HepG2 (cell line): ENCODE measurements at regions of chr15 and their contacts with region 1.

Region 1: DNA sequence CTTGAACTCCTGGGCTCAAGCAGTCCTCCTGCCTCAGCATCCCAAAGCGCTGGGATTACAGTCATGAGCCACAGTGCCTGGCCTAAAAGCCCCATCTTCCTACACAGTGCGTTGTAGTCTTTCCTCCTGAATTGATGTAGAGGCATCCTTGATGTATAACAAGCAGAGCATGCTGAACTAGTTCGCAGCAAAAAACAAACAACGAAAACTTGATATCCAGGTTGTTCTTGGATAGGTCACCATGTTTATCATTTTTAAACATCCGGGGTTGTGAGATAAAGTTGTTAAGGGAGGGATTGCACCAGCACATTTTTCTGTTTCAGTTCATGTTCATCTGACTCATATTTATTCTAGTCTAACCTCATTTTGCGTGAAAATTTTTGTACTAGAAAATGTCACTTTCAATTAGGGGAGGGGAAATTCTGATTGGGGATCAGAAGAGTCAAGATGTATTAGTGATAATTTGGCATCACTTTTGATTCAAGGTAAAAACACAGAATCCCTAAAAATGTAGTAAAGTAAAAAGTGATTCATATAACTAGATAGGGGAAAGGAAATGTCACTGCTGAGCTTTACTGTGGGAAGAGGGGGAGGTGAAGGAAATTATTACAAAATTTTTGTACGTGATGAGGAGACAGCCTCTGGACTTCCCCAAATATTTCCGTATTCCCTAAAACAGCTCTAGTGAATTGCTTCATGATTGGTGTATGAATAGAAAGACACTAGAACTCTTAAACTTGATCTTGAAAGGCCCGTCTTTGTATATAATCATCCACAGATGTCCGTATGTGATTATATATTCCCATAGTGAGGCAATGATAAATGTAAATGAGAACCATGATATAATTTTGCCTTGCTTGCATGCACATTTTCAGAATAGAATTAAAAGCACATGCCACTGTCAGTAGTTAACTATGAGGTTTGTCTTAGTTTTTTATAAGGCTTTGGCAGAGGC is 22.9 kb downstream of the RAB8B start:
- DNase-seq: peak; percentile 39
- ATAC-seq: no peak
- H3K4me3 ChIP-seq: no peak overlapping the region
- H3K27ac ChIP-seq: no peak overlapping the region
- H3K4me1 ChIP-seq: peaks cover 39% of the 10 kb centered on the region
- H3K27me3 ChIP-seq: no peaks in the 10 kb centered on the region; a peak in 1 of 5 replicates
- CTCF ChIP-seq: no peak
- EP300 ChIP-seq: no peak
- POLR2A ChIP-seq: no peak
- RAD21 ChIP-seq: no peak

Region 2: DNA sequence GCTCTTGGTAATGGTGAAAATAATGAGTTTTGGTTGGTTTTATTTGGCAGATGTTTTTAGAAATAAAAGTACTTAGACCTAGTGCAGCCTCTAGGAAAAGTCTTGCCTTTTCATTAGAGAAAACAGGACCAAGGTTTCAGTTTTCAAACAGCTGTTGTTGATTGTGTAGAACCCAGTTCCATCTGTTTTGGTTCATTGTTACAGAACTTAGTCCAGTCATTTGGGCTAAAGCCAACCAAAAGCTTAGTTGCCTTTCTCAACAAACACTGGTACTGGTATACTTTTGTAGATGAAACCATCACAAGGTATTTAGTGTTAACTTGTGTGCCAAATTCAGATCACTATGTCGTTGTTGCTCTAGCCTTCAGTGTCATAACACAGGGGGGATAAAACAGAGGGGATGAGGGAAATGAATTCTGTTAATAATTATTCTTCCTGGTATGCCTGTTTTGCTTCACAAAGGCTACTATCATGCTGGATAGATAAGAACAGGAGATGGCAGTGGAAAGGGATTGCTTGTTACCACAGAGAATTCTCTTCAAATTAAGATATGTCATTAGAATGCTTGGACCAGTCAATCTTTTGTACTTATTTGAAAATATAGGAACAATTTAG is 52.5 kb after region 1 on chr15:
- CTCF ChIA-PET with region 1: no interaction called
- POLR2A ChIA-PET with region 1: no interaction called
- in situ Hi-C with region 1: no loop called
- intact Hi-C with region 1: loop called (anchors 10 kb)
- DNase-seq: peak; percentile 64
- ATAC-seq: no peak
- H3K4me3 ChIP-seq: no peak overlapping the region
- H3K27ac ChIP-seq: no peak overlapping the region
- H3K4me1 ChIP-seq: peaks cover 42% of the 10 kb centered on the region
- H3K27me3 ChIP-seq: no peaks in the 10 kb centered on the region
- CTCF ChIP-seq: no peak
- EP300 ChIP-seq: no peak
- POLR2A ChIP-seq: no peak
- RAD21 ChIP-seq: no peak